ENCODE measurements at regions of chr17 and their contacts with region 1.

Region 1: GRCh38 chr17:48944519-48945260 is at the start of gene SNF8:
- DNase-seq: peak; percentile 89 to 92 (median 91)
- H3K4me3 ChIP-seq: peak within 1 kb of the TSS; percentile 91 to 99
- H3K4me3 Mint-ChIP-seq: peak within 1 kb of the TSS; percentile 95 to 99 (median 96)
- H3K27ac ChIP-seq: peak within 1 kb of the TSS; percentile 89
- H3K27ac Mint-ChIP-seq: peak within 1 kb of the TSS; percentile 96 to 98 (median 97)
- H3K4me1 ChIP-seq: peaks cover 28% of the 10 kb centered on the region
- H3K4me1 Mint-ChIP-seq: peaks cover 5 to 31% (median 13%) of the 10 kb centered on the region in 4 donors
- H3K27me3 ChIP-seq: no peaks in the 10 kb centered on the region
- H3K27me3 Mint-ChIP-seq: peaks cover 0 to 2% of the 10 kb centered on the region in 2 donors
- total RNA-seq, gene SNF8: 55.6 to 59.4 TPM

Region 2: DNA sequence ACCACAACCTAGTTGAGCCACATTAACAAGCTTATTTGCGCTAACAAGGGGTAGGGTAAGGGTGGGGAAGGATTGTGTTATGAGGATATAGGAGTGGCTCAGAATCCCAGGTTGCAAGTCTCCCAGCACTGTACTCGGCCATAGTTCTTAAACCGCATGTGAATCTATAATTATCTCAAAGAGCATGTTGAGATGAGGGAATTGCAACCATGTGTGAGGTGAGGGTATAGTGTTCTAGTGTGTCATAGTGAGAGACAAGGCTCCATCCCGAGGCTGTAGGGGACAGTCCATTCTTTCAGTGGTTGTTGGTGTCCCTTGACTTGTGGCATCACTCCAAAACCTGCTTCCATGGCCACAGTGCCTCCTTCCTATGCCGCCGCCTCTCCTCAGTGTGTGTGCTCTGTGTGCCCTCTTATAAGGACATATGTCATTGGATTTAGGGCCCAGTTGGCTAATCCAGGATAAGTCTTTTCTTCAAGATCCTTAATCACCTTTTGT is 74.8 kb before region 1 on chr17:
- CTCF ChIA-PET with region 1: no interaction called
- POLR2A ChIA-PET with region 1: no interaction called
- intact Hi-C with region 1: no loop called
- DNase-seq: no peak
- H3K4me3 ChIP-seq: no peak overlapping the region
- H3K4me3 Mint-ChIP-seq: no peak overlapping the region
- H3K27ac ChIP-seq: no peak overlapping the region
- H3K27ac Mint-ChIP-seq: peak overlapping the region in 1 of 7 donors; percentile 78
- H3K4me1 ChIP-seq: no peaks in the 10 kb centered on the region
- H3K4me1 Mint-ChIP-seq: peaks cover 0 to 4% (median 2%) of the 10 kb centered on the region in 4 donors
- H3K27me3 ChIP-seq: no peaks in the 10 kb centered on the region
- H3K27me3 Mint-ChIP-seq: peaks cover 0 to 1% of the 10 kb centered on the region in 2 donors

Region 3: GRCh38 chr17:48892940-48893645 is 51.6 kb before region 1 on chr17:
- CTCF ChIA-PET with region 1: no interaction called
- POLR2A ChIA-PET with region 1: interaction called, 21 read pairs
- intact Hi-C with region 1: loop called (anchors 5 kb)
- DNase-seq: peak in 1 of 5 donors; percentile 7
- H3K4me3 ChIP-seq: peak overlapping the region; percentile 80 to 93
- H3K4me3 Mint-ChIP-seq: peak overlapping the region; percentile 86 to 97 (median 93)
- H3K27ac ChIP-seq: peak overlapping the region; percentile 69
- H3K27ac Mint-ChIP-seq: peak overlapping the region; percentile 90 to 98 (median 97)
- H3K4me1 ChIP-seq: peaks cover 22% of the 10 kb centered on the region
- H3K4me1 Mint-ChIP-seq: peaks cover 12 to 27% (median 19%) of the 10 kb centered on the region in 4 donors
- H3K27me3 ChIP-seq: no peaks in the 10 kb centered on the region
- H3K27me3 Mint-ChIP-seq: no peaks in the 10 kb centered on the region

Region 4: GRCh38 chr17:48908047-48908843 is 36.4 kb before region 1 on chr17 and contains the start of gene UBE2Z:
- CTCF ChIA-PET with region 1: no interaction called
- POLR2A ChIA-PET with region 1: interaction called, 43 read pairs
- intact Hi-C with region 1: loop called (anchors 1 kb)
- DNase-seq: peak; percentile 83 to 89 (median 87)
- H3K4me3 ChIP-seq: peak within 1 kb of the TSS; percentile 63 to 65
- H3K4me3 Mint-ChIP-seq: peak within 1 kb of the TSS; percentile 91 to 98 (median 94)
- H3K27ac ChIP-seq: peak within 1 kb of the TSS; percentile 82
- H3K27ac Mint-ChIP-seq: peak within 1 kb of the TSS; percentile 96 to 99 (median 98)
- H3K4me1 ChIP-seq: peaks cover 50% of the 10 kb centered on the region
- H3K4me1 Mint-ChIP-seq: peaks cover 39 to 54% (median 46%) of the 10 kb centered on the region in 4 donors
- H3K27me3 ChIP-seq: no peaks in the 10 kb centered on the region
- H3K27me3 Mint-ChIP-seq: no peaks in the 10 kb centered on the region
- total RNA-seq, gene UBE2Z: 98.4 to 105 TPM